Natural killer cell (primary cell): ENCODE measurements at regions of chr4 and their contacts with region 1.

Region 1: DNA sequence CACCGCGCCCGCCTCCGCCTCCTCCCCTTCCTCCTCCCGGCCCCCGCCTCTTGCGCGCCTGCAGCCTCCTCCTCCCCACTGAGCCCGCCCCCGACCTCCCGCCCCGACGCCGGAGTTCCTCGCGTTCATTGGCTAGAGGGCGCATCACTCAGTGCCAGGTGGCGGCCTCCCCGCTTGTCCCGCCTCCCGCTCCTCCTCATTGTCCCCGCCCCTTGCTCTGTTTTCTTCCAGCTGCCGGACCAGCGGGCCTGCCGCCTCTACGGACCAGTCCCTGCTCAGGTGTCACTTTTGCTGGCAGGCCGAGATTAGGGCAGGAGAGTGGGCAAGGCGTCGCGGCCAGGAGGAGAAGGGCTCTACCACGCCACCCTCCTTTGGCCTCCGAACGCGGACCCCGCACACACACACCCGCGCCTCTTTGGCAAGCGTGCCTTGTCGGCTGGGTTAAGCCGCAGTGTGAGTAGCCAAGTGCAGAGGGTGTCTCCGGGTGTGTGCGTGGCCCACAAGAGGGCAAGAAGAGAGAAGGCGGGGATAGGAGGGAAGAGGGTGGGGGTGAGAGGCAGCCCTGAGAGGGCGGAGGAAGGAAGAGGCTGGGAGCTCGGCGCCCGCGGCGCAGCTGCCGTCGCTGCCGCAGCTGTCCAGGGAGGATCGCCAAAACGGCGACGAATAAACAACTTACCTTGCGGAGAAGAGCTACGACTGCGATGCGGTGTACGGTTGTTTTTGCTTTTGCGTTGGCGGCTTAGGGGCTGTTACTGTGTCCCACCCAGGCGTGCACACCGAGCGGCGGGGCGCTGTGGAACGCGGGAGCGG is 436 bp upstream of the PPP3CA start:
- DNase-seq: peak; percentile 98 to 99
- ATAC-seq: peak; percentile 81 to 93 (median 82)
- H3K4me3 ChIP-seq: peak overlapping the region; percentile 86
- H3K4me3 Mint-ChIP-seq: peak overlapping the region; percentile 98
- H3K27ac ChIP-seq: peak overlapping the region; percentile 84
- H3K27ac Mint-ChIP-seq: peak overlapping the region; percentile 94 to 95
- H3K4me1 ChIP-seq: peaks cover 14% of the 10 kb centered on the region
- H3K4me1 Mint-ChIP-seq: peaks cover 42% of the 10 kb centered on the region in 2 donors
- H3K27me3 ChIP-seq: peaks cover 2% of the 10 kb centered on the region
- H3K27me3 Mint-ChIP-seq: no peaks in the 10 kb centered on the region
- CTCF ChIP-seq: no peak

Region 2: GRCh38 chr4:101020956-101021355 is 326.8 kb before region 1 on chr4:
- intact Hi-C with region 1: loop called (anchors 10 kb)
- DNase-seq: peak in 1 of 2 donors; percentile 67
- ATAC-seq: peak; percentile 71 to 91 (median 77)
- H3K4me3 ChIP-seq: no peak overlapping the region
- H3K4me3 Mint-ChIP-seq: peak overlapping the region; percentile 52
- H3K27ac ChIP-seq: peak overlapping the region; percentile 72
- H3K27ac Mint-ChIP-seq: peak overlapping the region; percentile 87 to 93
- H3K4me1 ChIP-seq: peaks cover 28% of the 10 kb centered on the region
- H3K4me1 Mint-ChIP-seq: peaks cover 49 to 59% of the 10 kb centered on the region in 2 donors
- H3K27me3 ChIP-seq: no peaks in the 10 kb centered on the region
- H3K27me3 Mint-ChIP-seq: no peaks in the 10 kb centered on the region
- CTCF ChIP-seq: no peak

Region 3: DNA sequence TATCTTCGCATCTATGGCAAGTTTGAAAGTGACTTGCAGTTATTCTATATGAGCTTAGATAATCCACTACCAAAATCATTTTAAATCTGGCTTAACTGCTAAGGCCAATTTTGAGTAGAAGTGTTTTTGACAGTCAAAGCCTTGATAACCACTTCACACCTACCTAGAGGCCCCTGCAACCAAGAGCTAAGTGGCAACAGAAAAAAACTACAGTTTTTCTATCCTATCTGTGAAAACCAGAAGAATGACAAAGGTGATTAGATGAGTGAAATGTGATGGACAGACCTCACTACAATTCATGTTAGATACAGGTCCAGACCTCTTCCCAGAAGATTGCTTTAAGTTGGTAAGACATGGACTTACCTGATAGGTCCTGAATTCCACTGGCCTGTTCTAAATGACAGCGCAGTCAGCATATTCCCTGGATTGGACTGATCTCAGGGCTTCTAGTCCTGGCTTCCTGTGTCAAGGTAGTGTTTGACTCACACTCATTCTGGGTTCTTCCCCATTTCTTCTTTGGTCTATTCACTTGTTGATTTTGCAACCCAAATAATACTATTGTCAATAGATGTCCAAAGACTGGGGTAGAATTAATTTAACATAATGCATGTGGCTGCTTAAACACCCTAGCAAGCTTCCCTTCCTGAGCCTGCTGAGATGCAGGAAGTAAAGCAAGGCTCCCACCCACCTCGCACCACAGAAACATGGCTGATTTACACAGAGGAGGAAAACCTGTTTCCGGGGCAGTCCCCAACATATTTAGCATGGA is 65.5 kb before region 1 on chr4:
- intact Hi-C with region 1: loop called (anchors 5 kb)
- DNase-seq: peak in 1 of 2 donors; percentile 56
- ATAC-seq: peak; percentile 61 to 74 (median 65)
- H3K4me3 ChIP-seq: no peak overlapping the region
- H3K4me3 Mint-ChIP-seq: peak overlapping the region; percentile 58
- H3K27ac ChIP-seq: peak overlapping the region; percentile 23
- H3K27ac Mint-ChIP-seq: peak overlapping the region; percentile 80 to 87
- H3K4me1 ChIP-seq: peaks cover 13% of the 10 kb centered on the region
- H3K4me1 Mint-ChIP-seq: peaks cover 67 to 73% of the 10 kb centered on the region in 2 donors
- H3K27me3 ChIP-seq: no peaks in the 10 kb centered on the region
- H3K27me3 Mint-ChIP-seq: no peaks in the 10 kb centered on the region
- CTCF ChIP-seq: no peak

Region 4: DNA sequence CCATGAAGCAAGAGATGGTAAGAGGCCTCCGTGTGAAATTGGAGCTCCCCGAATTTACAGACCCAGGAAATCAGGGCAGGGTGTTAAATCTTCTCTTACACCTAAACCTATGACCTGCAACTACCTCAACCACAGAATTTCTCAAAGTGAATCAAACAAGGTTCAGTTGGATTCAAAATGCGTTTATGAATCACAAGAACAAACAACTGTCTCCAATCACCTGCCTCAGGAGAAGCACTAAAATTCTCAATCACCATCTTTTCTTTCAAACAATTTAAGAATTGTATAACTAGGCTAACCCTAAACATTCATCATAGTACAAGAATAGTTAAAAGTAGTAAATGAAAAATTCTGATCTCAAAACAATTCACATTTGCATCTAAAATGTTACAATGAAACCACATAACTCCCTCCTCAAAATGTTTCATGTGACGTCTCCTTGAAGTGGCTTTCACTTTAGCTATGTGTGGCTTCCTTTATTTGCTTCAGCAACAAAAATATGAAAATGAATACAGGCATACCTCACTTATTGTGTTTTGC is 19.6 kb before region 1 on chr4:
- intact Hi-C with region 1: loop called (anchors 1 kb)
- DNase-seq: peak in 1 of 2 donors; percentile 78
- ATAC-seq: peak; percentile 76 to 84 (median 84)
- H3K4me3 ChIP-seq: no peak overlapping the region
- H3K4me3 Mint-ChIP-seq: peak overlapping the region; percentile 74
- H3K27ac ChIP-seq: peak overlapping the region; percentile 80
- H3K27ac Mint-ChIP-seq: peak overlapping the region; percentile 90 to 92
- H3K4me1 ChIP-seq: peaks cover 16% of the 10 kb centered on the region
- H3K4me1 Mint-ChIP-seq: peaks cover 85 to 93% of the 10 kb centered on the region in 2 donors
- H3K27me3 ChIP-seq: no peaks in the 10 kb centered on the region
- H3K27me3 Mint-ChIP-seq: no peaks in the 10 kb centered on the region
- CTCF ChIP-seq: no peak

Region 5: DNA sequence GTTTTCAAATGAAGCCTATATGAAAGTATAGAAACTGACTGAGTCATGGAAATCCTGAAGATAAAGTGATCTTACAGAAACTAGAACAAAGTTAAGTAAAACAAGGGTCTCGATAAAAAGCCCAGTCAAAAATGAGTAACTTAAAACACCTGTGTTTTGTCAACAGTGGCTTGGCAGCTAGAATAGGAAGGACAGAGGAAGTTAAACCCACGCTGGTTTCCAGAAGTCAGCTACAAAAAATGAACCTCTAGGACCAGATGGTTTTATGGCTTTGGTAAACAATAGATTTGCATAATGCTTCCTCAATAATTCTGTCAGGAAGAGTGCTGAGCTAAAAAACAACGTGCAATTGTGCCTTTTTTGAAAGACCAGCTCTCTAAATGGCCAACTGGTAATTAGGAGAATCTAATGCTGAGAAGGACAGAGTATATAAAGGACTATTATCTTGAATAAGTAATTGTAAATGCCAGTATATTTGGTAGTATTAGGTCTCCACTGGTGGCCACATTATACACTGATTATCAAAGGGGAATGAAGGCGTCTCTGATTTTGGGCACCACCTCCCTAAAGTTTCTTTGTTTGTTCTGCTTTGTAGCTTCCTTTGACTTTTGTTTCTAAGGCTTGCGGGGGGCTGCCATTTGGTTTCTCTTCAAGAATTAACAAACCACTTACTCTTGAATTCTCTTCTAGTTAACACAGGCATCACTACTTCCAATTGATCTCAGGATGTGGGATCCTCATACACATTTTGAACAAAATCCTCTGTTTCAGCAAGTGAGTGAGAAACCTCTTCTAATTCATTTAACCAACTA is 71.8 kb after region 1 on chr4:
- intact Hi-C with region 1: loop called (anchors 5 kb)
- DNase-seq: peak in 1 of 2 donors; percentile 14
- ATAC-seq: no peak
- H3K4me3 ChIP-seq: no peak overlapping the region
- H3K4me3 Mint-ChIP-seq: peak overlapping the region; percentile 43
- H3K27ac ChIP-seq: no peak overlapping the region
- H3K27ac Mint-ChIP-seq: no peak overlapping the region
- H3K4me1 ChIP-seq: peaks cover 28% of the 10 kb centered on the region
- H3K4me1 Mint-ChIP-seq: peaks cover 54 to 55% of the 10 kb centered on the region in 2 donors
- H3K27me3 ChIP-seq: no peaks in the 10 kb centered on the region
- H3K27me3 Mint-ChIP-seq: peaks cover 0 to 2% of the 10 kb centered on the region in 2 donors
- CTCF ChIP-seq: no peak

Region 6: DNA sequence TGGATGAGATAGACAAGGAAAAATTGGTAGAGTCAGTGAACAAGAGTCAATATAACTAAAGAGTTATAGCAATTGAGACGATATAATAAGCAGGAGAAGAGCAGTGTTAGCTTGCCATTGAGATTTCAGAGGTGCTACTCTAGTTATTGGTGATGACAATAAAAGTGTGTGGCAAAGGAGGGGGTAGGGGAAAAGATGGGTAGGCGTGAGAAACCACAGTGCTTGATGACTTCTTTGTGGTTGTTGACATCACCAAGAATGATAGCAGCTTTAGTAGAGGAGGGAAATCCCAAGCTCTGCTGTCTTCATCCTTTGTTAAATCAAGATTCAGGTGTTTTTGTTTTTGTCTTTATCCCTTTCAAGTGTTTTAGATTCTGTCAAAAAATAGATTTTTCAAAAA is 179.4 kb after region 1 on chr4:
- intact Hi-C with region 1: loop called (anchors 2 kb)
- DNase-seq: peak; percentile 51 to 88
- ATAC-seq: peak; percentile 95 to 98 (median 97)
- H3K4me3 ChIP-seq: no peak overlapping the region
- H3K4me3 Mint-ChIP-seq: peak overlapping the region; percentile 1
- H3K27ac ChIP-seq: no peak overlapping the region
- H3K27ac Mint-ChIP-seq: peak overlapping the region; percentile 56 to 71
- H3K4me1 ChIP-seq: no peaks in the 10 kb centered on the region
- H3K4me1 Mint-ChIP-seq: peaks cover 13 to 20% of the 10 kb centered on the region in 2 donors
- H3K27me3 ChIP-seq: peaks cover 28% of the 10 kb centered on the region
- H3K27me3 Mint-ChIP-seq: peaks cover 50 to 55% of the 10 kb centered on the region in 2 donors
- CTCF ChIP-seq: no peak

Region 7: GRCh38 chr4:101596781-101597552 is 249.2 kb after region 1 on chr4:
- intact Hi-C with region 1: loop called (anchors 5 kb)
- DNase-seq: peak in 1 of 2 donors; percentile 70
- ATAC-seq: peak; percentile 30 to 55 (median 40)
- H3K4me3 ChIP-seq: no peak overlapping the region
- H3K4me3 Mint-ChIP-seq: no peak overlapping the region
- H3K27ac ChIP-seq: no peak overlapping the region
- H3K27ac Mint-ChIP-seq: no peak overlapping the region
- H3K4me1 ChIP-seq: no peaks in the 10 kb centered on the region
- H3K4me1 Mint-ChIP-seq: no peaks in the 10 kb centered on the region
- H3K27me3 ChIP-seq: no peaks in the 10 kb centered on the region
- H3K27me3 Mint-ChIP-seq: no peaks in the 10 kb centered on the region
- CTCF ChIP-seq: peak; percentile 62